ENCODE measurements at regions of chr14 and their contacts with region 1.

Region 1: DNA sequence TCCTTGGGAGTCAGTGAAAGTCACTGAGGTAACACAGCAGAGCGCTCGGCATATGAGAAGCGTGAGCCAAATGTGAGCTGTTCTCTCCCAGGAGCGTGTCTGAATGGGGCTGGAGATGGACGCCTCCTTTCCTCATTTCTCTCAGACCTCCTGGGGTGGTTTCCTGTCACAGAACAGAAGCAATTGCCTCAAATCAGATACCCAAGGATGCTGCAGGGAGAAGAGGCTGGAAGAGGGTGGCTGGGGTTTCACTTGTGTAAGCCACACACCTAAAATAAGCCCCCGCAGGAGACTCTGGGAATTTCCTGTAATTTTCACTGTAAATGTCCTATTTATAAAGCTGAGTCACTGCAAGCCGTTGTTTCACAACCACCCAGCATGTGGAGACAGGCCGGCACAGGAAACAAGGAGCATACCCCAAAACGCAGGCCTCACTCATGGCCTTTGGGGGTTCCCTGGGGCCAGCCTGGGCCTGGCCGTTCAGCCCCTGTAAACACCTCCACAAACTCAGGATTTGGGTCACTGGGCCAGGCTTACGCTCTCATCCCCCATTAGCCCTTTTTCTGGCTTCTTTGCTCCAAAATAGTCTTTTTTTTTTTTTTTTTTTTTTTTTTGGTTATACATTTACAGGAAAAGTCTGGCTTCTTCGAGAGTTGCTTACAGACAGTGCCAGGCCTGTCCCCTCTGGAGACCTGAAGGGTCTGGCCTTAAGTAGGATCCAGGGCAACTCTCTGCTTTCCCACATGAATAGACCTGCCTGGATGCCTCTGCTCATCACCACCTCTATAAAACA is 55.3 kb downstream of the VCPKMT start:
- DNase-seq: peak; percentile 82
- H3K4me3 ChIP-seq: no peak overlapping the region
- H3K27ac ChIP-seq: peak overlapping the region; percentile 88
- H3K4me1 ChIP-seq: peaks cover 31% of the 10 kb centered on the region
- H3K27me3 ChIP-seq: no peaks in the 10 kb centered on the region
- CTCF ChIP-seq: peak in 1 of 2 donors; percentile 4
- POLR2A ChIP-seq: no peak

Region 2: DNA sequence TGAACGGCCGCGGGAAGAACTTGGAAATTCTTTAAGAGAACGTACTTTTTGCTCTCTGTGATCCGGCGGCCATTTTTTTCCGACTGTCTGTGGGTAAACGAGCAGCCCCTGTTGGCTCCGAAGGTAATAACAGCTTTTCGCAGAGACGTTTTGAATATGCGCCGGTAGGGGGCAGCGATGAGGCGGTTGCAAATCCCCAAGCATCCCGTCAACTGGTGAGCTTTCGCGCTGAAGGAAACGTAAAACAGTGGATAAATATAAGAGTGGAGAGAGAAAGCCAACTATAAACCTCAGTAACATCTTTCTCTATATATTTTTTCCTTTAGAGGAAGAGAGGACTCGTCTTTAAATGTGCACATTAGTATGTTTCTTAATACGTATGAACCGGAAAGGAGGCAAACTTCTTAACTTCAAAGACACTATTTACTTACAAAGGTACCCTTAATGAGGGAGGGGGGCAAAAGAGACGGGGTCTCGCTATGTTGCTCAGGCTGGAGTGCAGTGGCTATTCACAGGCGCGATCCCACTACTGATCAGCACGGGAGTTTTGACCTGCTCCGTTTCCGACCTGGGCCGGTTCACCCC is 198.9 kb before region 1 on chr14:
- CTCF ChIA-PET with region 1: interaction called, 25 read pairs
- POLR2A ChIA-PET with region 1: no interaction called
- dilution Hi-C with region 1: no loop called
- intact Hi-C with region 1: loop called (anchors 1 kb)
- DNase-seq: peak; percentile 93
- H3K4me3 ChIP-seq: peak overlapping the region; percentile 59 to 91 (median 73)
- H3K27ac ChIP-seq: peak overlapping the region; percentile 77
- H3K4me1 ChIP-seq: peaks cover 15% of the 10 kb centered on the region
- H3K27me3 ChIP-seq: no peaks in the 10 kb centered on the region
- CTCF ChIP-seq: peak; percentile 100
- POLR2A ChIP-seq: no peak

Region 3: GRCh38 chr14:49879683-49880204 is 181.3 kb before region 1 on chr14:
- CTCF ChIA-PET with region 1: interaction called, 16 read pairs
- POLR2A ChIA-PET with region 1: no interaction called
- dilution Hi-C with region 1: no loop called
- intact Hi-C with region 1: loop called (anchors 1 kb)
- DNase-seq: peak; percentile 66
- H3K4me3 ChIP-seq: no peak overlapping the region
- H3K27ac ChIP-seq: no peak overlapping the region
- H3K4me1 ChIP-seq: no peaks in the 10 kb centered on the region
- H3K27me3 ChIP-seq: no peaks in the 10 kb centered on the region
- CTCF ChIP-seq: peak; percentile 72 to 73
- POLR2A ChIP-seq: no peak

Region 4: GRCh38 chr14:49892636-49893308 is 168.3 kb before region 1 on chr14 and contains the start of gene ARF6:
- CTCF ChIA-PET with region 1: interaction called, 12 read pairs
- POLR2A ChIA-PET with region 1: no interaction called
- dilution Hi-C with region 1: no loop called
- intact Hi-C with region 1: loop called (anchors 1 kb)
- DNase-seq: peak; percentile 97
- H3K4me3 ChIP-seq: peak within 1 kb of the TSS; percentile 27 to 92 (median 70)
- H3K27ac ChIP-seq: peak within 1 kb of the TSS; percentile 98
- H3K4me1 ChIP-seq: peaks cover 31% of the 10 kb centered on the region
- H3K27me3 ChIP-seq: no peaks in the 10 kb centered on the region
- CTCF ChIP-seq: no peak
- POLR2A ChIP-seq: peak; percentile 91
- total RNA-seq, gene ARF6: 73.2 and 73.6 TPM in 2 replicates

Region 5: GRCh38 chr14:49908432-49908781 is 152.7 kb before region 1 on chr14:
- CTCF ChIA-PET with region 1: interaction called, 10 read pairs
- POLR2A ChIA-PET with region 1: interaction called, 4 read pairs
- dilution Hi-C with region 1: no loop called
- intact Hi-C with region 1: loop called (anchors 1 kb)
- DNase-seq: no peak
- H3K4me3 ChIP-seq: no peak overlapping the region
- H3K27ac ChIP-seq: peak overlapping the region; percentile 96
- H3K4me1 ChIP-seq: peaks cover 36% of the 10 kb centered on the region
- H3K27me3 ChIP-seq: no peaks in the 10 kb centered on the region
- CTCF ChIP-seq: no peak
- POLR2A ChIP-seq: no peak

Region 6: GRCh38 chr14:50045039-50045711 is 15.9 kb before region 1 on chr14:
- CTCF ChIA-PET with region 1: interaction called, 17 read pairs
- POLR2A ChIA-PET with region 1: no interaction called
- dilution Hi-C with region 1: no loop called
- intact Hi-C with region 1: loop called (anchors 1 kb)
- DNase-seq: peak; percentile 69
- H3K4me3 ChIP-seq: no peak overlapping the region
- H3K27ac ChIP-seq: no peak overlapping the region
- H3K4me1 ChIP-seq: peaks cover 35% of the 10 kb centered on the region
- H3K27me3 ChIP-seq: no peaks in the 10 kb centered on the region
- CTCF ChIP-seq: no peak
- POLR2A ChIP-seq: no peak

Region 7: DNA sequence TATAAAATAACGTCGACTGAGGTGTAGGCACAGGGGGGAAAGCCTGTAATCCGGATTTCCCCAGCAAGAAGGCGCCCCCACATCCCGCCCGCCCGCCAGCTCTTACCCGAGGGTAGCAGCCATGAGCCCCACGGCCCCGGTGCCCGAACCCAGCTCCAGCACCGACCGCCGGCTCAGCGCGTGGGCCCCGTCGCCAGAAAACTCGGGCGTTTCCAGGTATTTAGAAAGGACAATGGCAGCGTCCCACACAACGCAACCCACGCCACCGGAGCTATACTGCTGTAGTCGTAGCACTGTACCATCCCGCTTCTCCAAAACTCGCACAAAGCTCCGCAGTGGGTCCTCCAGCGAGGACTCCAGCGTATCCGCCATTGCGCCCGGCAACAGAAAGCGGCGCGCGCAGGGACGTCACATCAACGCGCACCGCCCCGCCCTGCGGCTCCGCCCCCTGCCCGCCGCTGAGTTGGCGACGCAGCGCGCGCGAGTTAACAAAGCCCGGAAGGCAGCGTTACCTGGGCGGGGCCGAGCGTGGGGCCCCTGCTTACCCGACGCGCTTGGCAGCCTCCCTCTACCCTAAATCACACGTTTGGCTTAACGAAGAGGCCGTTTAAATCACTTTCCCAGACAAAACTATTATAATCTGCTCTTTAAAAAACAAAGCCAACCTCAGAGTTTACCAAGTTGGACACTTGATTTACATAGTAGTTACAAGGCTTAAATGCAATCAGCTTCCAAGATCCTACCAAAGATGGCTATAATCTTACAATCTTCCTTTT is 55.3 kb after region 1 on chr14 and contains the start of gene VCPKMT:
- CTCF ChIA-PET with region 1: no interaction called
- POLR2A ChIA-PET with region 1: no interaction called
- dilution Hi-C with region 1: no loop called
- intact Hi-C with region 1: no loop called
- DNase-seq: peak; percentile 95
- H3K4me3 ChIP-seq: peak within 1 kb of the TSS; percentile 72 to 99 (median 78)
- H3K27ac ChIP-seq: peak within 1 kb of the TSS; percentile 73
- H3K4me1 ChIP-seq: peaks cover 17% of the 10 kb centered on the region
- H3K27me3 ChIP-seq: no peaks in the 10 kb centered on the region
- CTCF ChIP-seq: no peak
- POLR2A ChIP-seq: peak; percentile 93
- total RNA-seq, gene VCPKMT: 6.9 and 9.2 TPM in 2 replicates

Measured in endothelial cell of umbilical vein (primary cell).